MCF 10A (cell line): ENCODE measurements at regions of chr6 and their contacts with region 1.

Region 1: DNA sequence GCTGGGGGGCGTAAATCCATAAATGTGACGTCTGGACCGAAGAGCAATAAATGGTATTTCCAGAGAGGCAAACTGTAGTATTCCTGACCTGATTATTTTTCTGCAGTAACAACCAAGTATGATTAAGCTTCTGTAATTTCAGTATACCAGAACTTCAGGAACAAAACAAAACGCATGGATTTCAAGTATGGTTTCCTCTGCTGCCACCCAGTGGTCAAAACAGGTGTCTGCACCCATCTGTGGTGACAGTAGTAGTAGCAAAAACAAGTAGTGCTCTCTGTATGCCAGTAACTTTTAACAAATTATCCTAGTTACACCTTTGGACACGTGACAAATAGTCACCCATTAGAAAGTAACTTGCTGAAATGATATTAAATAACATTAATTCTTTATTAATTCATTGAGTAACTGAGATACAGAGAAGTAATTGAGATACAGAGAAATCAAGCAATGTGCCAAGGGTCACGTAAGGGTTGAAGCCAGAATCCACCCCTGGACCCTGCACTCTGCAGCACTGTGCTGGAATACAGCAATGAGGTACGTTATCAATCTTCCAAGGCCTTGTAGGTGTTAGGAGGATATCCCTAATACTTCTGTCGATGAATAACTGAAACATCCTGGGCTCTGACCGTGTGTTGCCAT is 7.9 kb downstream of the CALHM4 start:
- DNase-seq: peak; percentile 75
- H3K4me3 Mint-ChIP-seq: no peak overlapping the region
- H3K27ac Mint-ChIP-seq: no peak overlapping the region
- H3K4me1 Mint-ChIP-seq: peaks cover 6% of the 10 kb centered on the region
- H3K27me3 Mint-ChIP-seq: no peaks in the 10 kb centered on the region
- CTCF ChIP-seq: peak; percentile 81

Region 2: GRCh38 chr6:116485559-116486184 is 75.8 kb before region 1 on chr6:
- CTCF ChIA-PET with region 1: no interaction called
- POLR2A ChIA-PET with region 1: no interaction called
- intact Hi-C with region 1: no loop called
- DNase-seq: no peak
- H3K4me3 Mint-ChIP-seq: no peak overlapping the region
- H3K27ac Mint-ChIP-seq: no peak overlapping the region
- H3K4me1 Mint-ChIP-seq: no peaks in the 10 kb centered on the region
- H3K27me3 Mint-ChIP-seq: no peaks in the 10 kb centered on the region
- CTCF ChIP-seq: no peak

Region 3: GRCh38 chr6:116542426-116542825 is 19.1 kb before region 1 on chr6:
- CTCF ChIA-PET with region 1: interaction called, 47 read pairs
- POLR2A ChIA-PET with region 1: interaction called, 5 read pairs
- intact Hi-C with region 1: no loop called
- DNase-seq: no peak
- H3K4me3 Mint-ChIP-seq: no peak overlapping the region
- H3K27ac Mint-ChIP-seq: no peak overlapping the region
- H3K4me1 Mint-ChIP-seq: no peaks in the 10 kb centered on the region
- H3K27me3 Mint-ChIP-seq: no peaks in the 10 kb centered on the region
- CTCF ChIP-seq: no peak

Region 4: GRCh38 chr6:116550796-116551195 is 10.7 kb before region 1 on chr6:
- CTCF ChIA-PET with region 1: interaction called, 17 read pairs
- POLR2A ChIA-PET with region 1: interaction called, 5 read pairs
- intact Hi-C with region 1: no loop called
- DNase-seq: no peak
- H3K4me3 Mint-ChIP-seq: no peak overlapping the region
- H3K27ac Mint-ChIP-seq: no peak overlapping the region
- H3K4me1 Mint-ChIP-seq: peaks cover 2% of the 10 kb centered on the region
- H3K27me3 Mint-ChIP-seq: no peaks in the 10 kb centered on the region
- CTCF ChIP-seq: no peak